Activated naive CD4-positive, alpha-beta T cell treated with anti-CD3 and anti-CD28 coated beads for 36 hours (primary cell): ENCODE measurements at regions of chr3 and their contacts with region 1.

Region 1: DNA sequence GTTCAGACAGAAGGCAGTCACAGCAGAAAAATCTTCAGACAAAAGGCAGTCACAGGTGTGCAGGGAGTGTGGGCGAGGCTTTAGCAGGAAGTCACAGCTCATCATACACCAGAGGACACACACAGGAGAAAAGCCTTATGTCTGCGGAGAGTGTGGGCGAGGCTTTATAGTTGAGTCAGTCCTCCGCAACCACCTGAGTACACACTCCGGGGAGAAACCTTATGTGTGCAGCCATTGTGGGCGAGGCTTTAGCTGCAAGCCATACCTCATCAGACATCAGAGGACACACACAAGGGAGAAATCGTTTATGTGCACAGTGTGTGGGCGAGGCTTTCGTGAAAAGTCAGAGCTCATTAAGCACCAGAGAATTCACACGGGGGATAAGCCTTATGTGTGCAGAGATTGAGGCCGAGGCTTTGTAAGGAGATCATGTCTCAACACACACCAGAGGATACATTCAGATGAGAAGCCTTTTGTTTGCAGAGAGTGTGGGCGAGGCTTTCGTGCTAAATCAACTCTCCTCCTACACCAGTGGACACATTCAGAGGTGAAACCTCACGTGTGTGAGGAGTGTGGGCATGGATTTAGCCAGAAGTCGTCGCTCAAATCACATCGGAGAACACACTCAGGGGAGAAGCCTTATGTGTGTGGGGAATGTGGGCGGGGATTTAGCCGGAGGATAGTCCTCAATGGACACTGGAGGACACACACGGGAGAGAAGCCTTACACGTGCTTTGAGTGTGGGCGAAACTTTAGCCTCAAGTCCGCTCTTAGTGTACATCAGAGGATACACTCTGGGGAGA is 27.7 kb downstream of the ZNF589 start:
- DNase-seq: peak; percentile 96
- H3K4me3 Mint-ChIP-seq: peak overlapping the region; percentile 37
- H3K27ac Mint-ChIP-seq: peak overlapping the region; percentile 88
- H3K4me1 Mint-ChIP-seq: peaks cover 32% of the 10 kb centered on the region
- H3K27me3 Mint-ChIP-seq: no peaks in the 10 kb centered on the region

Region 2: DNA sequence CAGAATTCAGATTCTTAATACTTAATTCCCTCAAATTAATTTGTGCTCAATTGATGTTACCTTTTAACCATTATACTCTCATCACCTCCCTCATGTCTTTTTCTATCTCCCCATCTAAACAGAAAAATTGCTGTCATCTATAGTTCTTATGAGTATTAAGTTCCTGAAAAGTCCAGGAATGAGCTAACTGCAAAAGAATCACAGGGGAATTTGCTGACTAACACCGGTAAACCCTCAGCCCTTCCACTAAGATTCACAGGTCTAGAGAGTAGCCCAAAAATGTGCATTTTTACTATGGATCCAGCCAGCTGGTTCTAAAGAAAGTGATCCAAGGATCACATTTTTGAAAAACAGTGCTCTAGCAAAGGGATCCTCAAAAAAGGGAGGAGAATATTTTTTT is 1171.6 kb before region 1 on chr3:
- CTCF ChIA-PET with region 1: no interaction called
- intact Hi-C with region 1: no loop called
- DNase-seq: no peak
- H3K4me3 Mint-ChIP-seq: no peak overlapping the region
- H3K27ac Mint-ChIP-seq: peak overlapping the region; percentile 20
- H3K4me1 Mint-ChIP-seq: peaks cover 8% of the 10 kb centered on the region
- H3K27me3 Mint-ChIP-seq: no peaks in the 10 kb centered on the region

Region 3: DNA sequence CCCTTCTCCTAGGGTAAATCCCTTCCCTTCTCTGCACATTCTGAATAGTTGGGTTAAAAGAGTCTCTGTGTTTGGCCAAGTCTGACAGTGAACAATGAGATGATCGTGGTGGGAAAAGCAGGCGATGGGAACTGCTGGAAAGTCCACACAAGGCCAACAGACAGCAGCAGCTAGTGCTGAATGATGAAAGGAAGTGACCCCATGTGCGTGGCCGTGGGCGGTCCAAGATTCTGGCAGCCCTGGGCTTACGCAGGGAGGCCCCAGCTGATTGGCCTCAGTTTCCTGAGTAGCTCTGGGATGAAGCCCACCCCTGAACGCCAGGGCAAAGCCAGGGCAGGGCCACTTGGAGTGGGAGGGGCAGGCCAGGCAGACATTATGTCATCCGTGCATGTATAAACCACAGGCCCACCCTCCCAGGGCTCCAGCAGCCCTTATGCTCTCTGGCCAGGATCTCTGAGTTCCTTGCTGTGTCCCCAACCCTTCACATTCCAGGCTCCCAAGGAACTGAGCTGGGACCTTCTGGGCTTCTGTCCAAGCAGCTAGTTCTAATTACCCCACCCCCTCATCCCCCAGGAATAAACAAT is 138.2 kb before region 1 on chr3:
- CTCF ChIA-PET with region 1: no interaction called
- intact Hi-C with region 1: no loop called
- DNase-seq: no peak
- H3K4me3 Mint-ChIP-seq: no peak overlapping the region
- H3K27ac Mint-ChIP-seq: no peak overlapping the region
- H3K4me1 Mint-ChIP-seq: no peaks in the 10 kb centered on the region
- H3K27me3 Mint-ChIP-seq: no peaks in the 10 kb centered on the region

Region 4: DNA sequence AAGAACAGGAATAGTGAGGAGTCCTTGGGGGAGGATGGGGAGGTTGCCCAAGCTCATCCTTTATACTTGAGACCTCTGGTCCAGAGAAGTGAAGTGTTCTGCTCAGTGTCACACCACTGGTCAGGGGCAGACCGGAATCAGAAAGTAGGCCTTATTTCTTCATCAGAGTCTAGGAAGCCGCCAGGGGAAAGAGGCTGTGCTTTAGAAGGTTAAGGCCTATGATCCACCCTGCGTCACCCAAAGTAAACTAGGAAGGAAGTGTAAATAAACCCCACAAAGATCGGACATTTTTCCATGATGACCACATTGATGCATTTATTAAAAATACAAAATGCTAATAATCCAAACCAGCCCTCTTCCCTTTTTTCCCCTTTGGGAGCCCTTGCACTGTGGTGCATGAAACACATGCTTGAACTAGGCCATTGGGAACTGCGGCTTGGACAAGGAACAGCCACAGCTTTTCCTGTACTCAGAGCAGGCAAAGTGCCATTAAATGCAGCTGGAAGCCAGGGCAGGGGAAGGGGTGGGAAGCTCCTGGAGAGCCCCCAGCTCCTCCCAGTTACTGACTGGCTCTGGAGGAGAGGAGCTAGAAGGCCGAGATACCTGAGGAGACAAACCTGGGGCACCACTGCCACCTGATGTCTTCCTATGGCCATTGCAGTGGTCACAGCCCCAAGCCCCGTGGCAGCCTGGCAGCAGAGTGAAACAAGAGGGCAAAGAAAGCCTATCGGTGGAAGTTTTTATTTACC is 117.3 kb before region 1 on chr3:
- CTCF ChIA-PET with region 1: no interaction called
- intact Hi-C with region 1: no loop called
- DNase-seq: peak; percentile 75
- H3K4me3 Mint-ChIP-seq: no peak overlapping the region
- H3K27ac Mint-ChIP-seq: no peak overlapping the region
- H3K4me1 Mint-ChIP-seq: no peaks in the 10 kb centered on the region
- H3K27me3 Mint-ChIP-seq: no peaks in the 10 kb centered on the region

Region 5: GRCh38 chr3:48188266-48189201 is 80.0 kb before region 1 on chr3 and contains the start of gene CDC25A:
- CTCF ChIA-PET with region 1: no interaction called
- intact Hi-C with region 1: loop called (anchors 1 kb)
- DNase-seq: peak; percentile 98
- H3K4me3 Mint-ChIP-seq: peak within 1 kb of the TSS; percentile 88
- H3K27ac Mint-ChIP-seq: peak within 1 kb of the TSS; percentile 61
- H3K4me1 Mint-ChIP-seq: peaks cover 17% of the 10 kb centered on the region
- H3K27me3 Mint-ChIP-seq: peaks cover 11% of the 10 kb centered on the region
- total RNA-seq, gene CDC25A: 40.8 to 41.8 TPM

Region 6: GRCh38 chr3:48232734-48233133 is 35.8 kb before region 1 on chr3:
- CTCF ChIA-PET with region 1: interaction called, 3 read pairs
- intact Hi-C with region 1: loop called (anchors 2 kb)
- DNase-seq: peak; percentile 74
- H3K4me3 Mint-ChIP-seq: no peak overlapping the region
- H3K27ac Mint-ChIP-seq: no peak overlapping the region
- H3K4me1 Mint-ChIP-seq: no peaks in the 10 kb centered on the region
- H3K27me3 Mint-ChIP-seq: no peaks in the 10 kb centered on the region

Region 7: GRCh38 chr3:48240711-48241491 is 27.7 kb before region 1 on chr3 and contains the start of gene ZNF589:
- CTCF ChIA-PET with region 1: interaction called, 3 read pairs
- intact Hi-C with region 1: loop called (anchors 1 kb)
- DNase-seq: peak; percentile 96
- H3K4me3 Mint-ChIP-seq: peak within 1 kb of the TSS; percentile 88
- H3K27ac Mint-ChIP-seq: peak within 1 kb of the TSS; percentile 86
- H3K4me1 Mint-ChIP-seq: peaks cover 28% of the 10 kb centered on the region
- H3K27me3 Mint-ChIP-seq: no peaks in the 10 kb centered on the region
- total RNA-seq, gene ZNF589: 15.8 to 16.3 TPM

Region 8: GRCh38 chr3:48301020-48301796 is 32.6 kb after region 1 on chr3:
- CTCF ChIA-PET with region 1: interaction called, 3 read pairs
- intact Hi-C with region 1: loop called (anchors 1 kb)
- DNase-seq: peak; percentile 94
- H3K4me3 Mint-ChIP-seq: peak within 1 kb of the TSS; percentile 94
- H3K27ac Mint-ChIP-seq: peak within 1 kb of the TSS; percentile 96
- H3K4me1 Mint-ChIP-seq: peaks cover 28% of the 10 kb centered on the region
- H3K27me3 Mint-ChIP-seq: no peaks in the 10 kb centered on the region

Region 9: GRCh38 chr3:48318783-48319468 is 50.3 kb after region 1 on chr3:
- CTCF ChIA-PET with region 1: no interaction called
- intact Hi-C with region 1: no loop called
- DNase-seq: no peak
- H3K4me3 Mint-ChIP-seq: no peak overlapping the region
- H3K27ac Mint-ChIP-seq: no peak overlapping the region
- H3K4me1 Mint-ChIP-seq: peaks cover 7% of the 10 kb centered on the region
- H3K27me3 Mint-ChIP-seq: no peaks in the 10 kb centered on the region

Region 10: GRCh38 chr3:48507351-48508061 is 238.9 kb after region 1 on chr3:
- CTCF ChIA-PET with region 1: no interaction called
- intact Hi-C with region 1: loop called (anchors 2 kb)
- DNase-seq: peak; percentile 82
- H3K4me3 Mint-ChIP-seq: peak overlapping the region; percentile 32
- H3K27ac Mint-ChIP-seq: peak overlapping the region; percentile 66
- H3K4me1 Mint-ChIP-seq: peaks cover 47% of the 10 kb centered on the region
- H3K27me3 Mint-ChIP-seq: no peaks in the 10 kb centered on the region